Adrenal gland (tissue), 19 donors: ENCODE measurements at regions of chr16 and their contacts with region 1.

Region 1: GRCh38 chr16:2867987-2868789 is 10.2 kb upstream of the PRSS22 start:
- DNase-seq: peak; percentile 93 to 98 (median 96)
- H3K4me3 ChIP-seq: peak overlapping the region; percentile 16 to 62 (median 42)
- H3K27ac ChIP-seq: peak overlapping the region; percentile 39 to 97 (median 90)
- H3K4me1 ChIP-seq: peaks cover 7% of the 10 kb centered on the region in 2 donors
- H3K27me3 ChIP-seq: no peaks in the 10 kb centered on the region
- CTCF ChIP-seq: peak; percentile 90 to 99 (median 98)
- POLR2A ChIP-seq: peak; percentile 63 to 72

Region 2: GRCh38 chr16:2838928-2839327 is 29.3 kb before region 1 on chr16:
- intact Hi-C with region 1: loop called in 1 of 2 experiments (anchors 2 kb)
- DNase-seq: peak; percentile 74 to 90 (median 86)
- H3K4me3 ChIP-seq: no peak overlapping the region
- H3K27ac ChIP-seq: no peak overlapping the region
- H3K4me1 ChIP-seq: peaks cover 0 to 6% of the 10 kb centered on the region in 2 donors
- H3K27me3 ChIP-seq: peaks cover 5% of the 10 kb centered on the region
- CTCF ChIP-seq: peak; percentile 77 to 95 (median 90)
- POLR2A ChIP-seq: no peak

Region 3: DNA sequence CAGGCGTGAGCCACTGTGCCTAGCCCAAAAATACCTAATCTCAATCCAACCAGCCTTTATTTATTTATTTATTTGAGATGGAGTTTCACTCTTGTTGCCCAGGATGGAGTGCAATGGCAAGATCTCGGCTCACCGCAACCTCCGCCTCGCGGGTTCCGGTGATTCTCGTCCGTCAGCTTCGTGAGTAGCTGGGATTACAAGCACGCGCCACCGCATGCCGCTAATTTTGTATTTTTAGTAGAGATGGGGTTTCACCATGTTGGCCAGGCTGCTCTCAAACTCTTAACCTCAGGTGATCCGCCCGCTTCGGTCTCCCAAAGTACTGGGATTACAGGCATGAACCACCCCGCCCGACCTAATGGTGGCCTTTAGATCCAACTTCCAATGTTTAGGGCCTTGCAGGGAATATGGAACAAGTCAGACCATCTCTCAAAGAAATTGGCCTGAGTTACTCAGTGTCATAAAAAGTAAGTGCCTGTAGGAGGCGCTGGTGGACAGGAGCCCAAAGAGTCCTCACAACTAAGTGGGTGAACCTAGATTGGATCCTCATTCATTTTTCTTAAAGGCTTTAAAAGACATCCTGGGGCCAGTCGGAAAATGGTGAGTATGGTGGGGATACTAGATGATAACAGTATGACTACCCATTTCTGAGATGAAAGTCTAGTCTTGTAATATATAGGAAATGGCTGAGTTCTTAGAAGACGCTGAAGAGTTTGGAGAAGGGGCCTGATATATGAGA is 226.3 kb after region 1 on chr16:
- intact Hi-C with region 1: no loop called
- DNase-seq: peak in 4 of 7 donors; percentile 64 to 76 (median 73)
- H3K4me3 ChIP-seq: no peak overlapping the region
- H3K27ac ChIP-seq: no peak overlapping the region
- H3K4me1 ChIP-seq: peaks cover 0 to 1% of the 10 kb centered on the region in 2 donors
- H3K27me3 ChIP-seq: no peaks in the 10 kb centered on the region
- CTCF ChIP-seq: peak; percentile 57 to 73 (median 64)
- POLR2A ChIP-seq: no peak